ENCODE measurements at regions of chr9 and their contacts with region 1.

Region 1: DNA sequence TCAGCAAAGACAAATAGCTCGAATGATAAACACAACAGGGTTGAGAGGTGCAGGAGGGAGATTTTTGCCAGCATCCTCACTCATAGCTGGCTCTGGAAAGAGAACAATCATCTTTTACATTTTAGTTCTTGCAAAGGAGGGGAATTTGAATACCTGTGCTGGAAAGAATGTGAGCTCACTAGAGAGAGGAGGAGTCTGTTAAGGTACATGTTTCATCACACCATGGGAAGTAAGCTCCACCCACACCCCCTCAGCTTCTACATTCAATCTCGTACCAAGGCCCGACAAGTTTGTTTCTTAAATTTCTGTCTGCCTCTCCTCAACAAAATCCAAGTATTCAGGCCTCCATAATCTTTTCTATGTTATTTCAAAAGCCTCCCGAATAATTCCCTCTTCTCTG is 254.6 kb downstream of the BRINP1 start:
- DNase-seq: no peak

Region 2: DNA sequence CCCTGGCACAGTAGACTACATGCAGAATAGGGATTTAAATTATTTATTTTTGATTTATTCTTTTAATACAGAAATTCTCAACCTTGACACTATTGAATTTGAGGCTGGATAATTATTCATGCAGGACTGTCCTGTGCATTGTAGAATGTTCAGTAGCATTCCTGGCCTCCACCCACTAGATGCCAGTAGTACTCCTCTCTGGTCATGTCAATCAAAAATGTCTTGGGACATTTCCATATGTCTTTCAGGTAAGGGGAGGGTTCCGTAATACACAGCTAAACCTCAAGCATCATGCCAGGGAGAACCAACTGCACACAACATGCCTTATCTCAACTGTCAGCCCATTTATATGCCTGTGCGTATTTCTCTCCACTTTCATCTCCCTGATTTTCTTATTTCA is 22.8 kb after region 1 on chr9:
- intact Hi-C with region 1: no loop called
- DNase-seq: no peak

Region 3: GRCh38 chr9:119264165-119264564 is 149.5 kb after region 1 on chr9:
- intact Hi-C with region 1: loop called in 1 of 2 experiments (anchors 5 kb)
- DNase-seq: no peak

Region 4: GRCh38 chr9:119435066-119435465 is 320.4 kb after region 1 on chr9:
- intact Hi-C with region 1: no loop called
- DNase-seq: no peak